ENCODE measurements at regions of chr6 and their contacts with region 1.

Region 1: DNA sequence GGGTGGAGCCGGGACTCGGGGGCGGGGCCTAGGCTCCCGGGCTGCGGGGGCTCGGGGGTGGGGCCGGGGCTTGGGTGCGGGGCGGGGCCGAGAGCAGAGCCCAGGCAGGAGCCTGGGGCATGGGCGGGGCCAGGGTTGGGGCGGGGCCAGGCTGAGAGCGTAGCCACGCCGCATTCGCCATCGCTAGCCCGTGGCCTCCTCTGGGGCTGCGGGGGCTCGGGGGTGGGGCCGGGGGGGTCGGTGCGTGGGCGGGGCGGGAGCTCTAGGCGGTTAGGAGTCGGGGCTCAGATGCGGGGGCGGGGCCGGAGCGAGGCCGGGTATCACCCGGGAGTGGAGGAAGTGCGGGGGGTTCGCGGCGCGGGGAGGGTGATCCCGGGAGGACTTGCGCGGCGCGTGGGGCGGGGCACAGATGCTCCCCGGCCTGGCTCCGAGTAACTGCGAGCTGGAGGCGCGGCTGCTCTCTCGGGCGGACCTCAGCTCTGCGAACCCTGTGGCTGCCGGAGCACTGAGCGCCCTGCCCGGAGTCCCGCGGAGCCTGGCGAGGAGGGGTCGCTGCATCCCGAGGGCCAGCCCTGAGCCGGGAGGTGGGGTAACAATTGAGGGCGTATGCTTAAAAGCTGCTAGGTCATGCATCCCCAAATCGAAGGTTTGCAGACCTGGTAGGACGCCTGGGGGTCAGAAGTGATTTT is 434 bp upstream of the ECI2 start:
- DNase-seq: peak; percentile 99
- H3K4me3 ChIP-seq: peak overlapping the region; percentile 85 to 93 (median 92)
- H3K27ac ChIP-seq: peak overlapping the region; percentile 95 to 98 (median 96)
- H3K4me1 ChIP-seq: peaks cover 15 to 47% (median 33%) of the 10 kb centered on the region in 4 donors
- H3K27me3 ChIP-seq: no peaks in the 10 kb centered on the region
- CTCF ChIP-seq: no peak
- EP300 ChIP-seq: no peak
- POLR2A ChIP-seq: no peak

Region 2: DNA sequence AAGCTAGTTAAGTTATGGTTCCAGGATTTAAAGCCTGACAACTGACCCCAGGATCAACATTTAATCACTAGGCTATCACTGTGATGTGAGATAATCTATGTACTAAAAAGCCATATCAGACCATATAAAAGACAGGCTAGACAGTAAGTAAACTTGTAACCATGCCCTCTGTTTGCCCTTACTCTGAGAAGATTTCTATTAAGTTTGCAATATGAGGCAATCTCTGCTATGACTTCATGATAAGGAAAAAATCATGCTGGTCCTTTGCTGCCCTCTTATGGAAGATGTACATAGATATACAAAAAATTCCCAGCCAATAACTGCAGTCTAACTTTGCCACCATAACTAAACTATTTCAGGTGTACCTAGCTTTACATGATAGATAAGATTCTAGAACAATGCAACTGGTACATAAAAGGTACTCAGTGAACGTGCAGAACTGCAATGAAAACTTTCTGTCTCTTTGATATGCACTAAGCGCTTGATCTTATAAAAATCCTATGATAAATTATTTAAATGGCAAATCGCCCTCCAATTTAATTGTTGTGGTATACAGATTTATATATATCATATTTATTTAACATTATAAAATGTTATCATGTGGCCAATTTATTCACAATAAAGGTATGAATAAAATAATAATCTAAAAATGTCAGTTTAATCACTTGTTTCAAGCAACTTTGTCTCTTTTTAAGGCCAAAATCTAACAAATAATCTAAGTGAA is 127.3 kb before region 1 on chr6:
- intact Hi-C with region 1: no loop called
- DNase-seq: no peak
- H3K4me3 ChIP-seq: no peak overlapping the region
- H3K27ac ChIP-seq: peak overlapping the region in 3 of 4 donors; percentile 12 to 57 (median 38)
- H3K4me1 ChIP-seq: peaks cover 6 to 20% (median 16%) of the 10 kb centered on the region in 4 donors
- H3K27me3 ChIP-seq: no peaks in the 10 kb centered on the region
- CTCF ChIP-seq: peak; percentile 51 to 55 (median 52)
- EP300 ChIP-seq: no peak
- POLR2A ChIP-seq: no peak

Region 3: DNA sequence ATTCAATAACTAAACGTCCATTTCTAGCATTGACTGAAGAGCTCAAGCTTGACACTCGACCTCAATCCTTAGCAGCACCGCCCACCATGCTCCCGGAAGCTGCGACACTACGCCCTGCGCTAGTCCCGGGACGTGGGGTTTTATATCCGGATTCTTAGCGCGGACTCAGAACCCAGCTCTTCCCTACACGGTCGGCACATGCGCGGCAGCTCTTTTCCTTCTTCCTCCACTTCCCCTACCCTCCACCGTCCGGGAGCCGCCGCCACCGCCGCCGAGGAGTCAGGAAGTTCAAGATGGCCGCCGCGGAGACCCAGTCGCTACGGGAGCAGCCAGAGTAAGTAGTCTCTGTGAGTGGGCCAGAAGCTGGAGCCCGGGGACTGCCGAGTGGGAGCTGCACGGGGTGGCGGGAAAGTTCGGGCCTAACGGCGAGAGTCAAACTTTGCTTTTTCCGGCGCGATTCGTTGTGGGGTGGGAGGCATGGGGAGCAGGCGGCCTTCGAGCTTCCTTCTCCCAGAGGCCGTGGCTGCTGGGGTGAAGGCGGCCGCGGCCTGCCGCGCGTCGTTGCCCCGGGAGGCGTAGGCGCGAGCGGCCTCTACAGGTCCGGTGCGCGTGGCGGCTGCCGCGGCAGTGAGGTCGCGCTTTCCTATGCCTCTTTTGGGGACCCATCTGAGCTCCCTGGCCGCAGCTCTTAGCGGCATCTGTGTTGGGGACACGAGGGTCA is 114.5 kb before region 1 on chr6:
- intact Hi-C with region 1: loop called (anchors 10 kb)
- DNase-seq: peak; percentile 98
- H3K4me3 ChIP-seq: peak overlapping the region; percentile 74 to 91 (median 86)
- H3K27ac ChIP-seq: peak overlapping the region; percentile 93 to 98 (median 98)
- H3K4me1 ChIP-seq: peaks cover 69 to 79% (median 76%) of the 10 kb centered on the region in 4 donors
- H3K27me3 ChIP-seq: peaks cover 0 to 3% (median 0%) of the 10 kb centered on the region in 4 donors
- CTCF ChIP-seq: peak in 2 of 3 experiments; percentile 29 to 48
- EP300 ChIP-seq: no peak
- POLR2A ChIP-seq: peak; percentile 8

Region 4: DNA sequence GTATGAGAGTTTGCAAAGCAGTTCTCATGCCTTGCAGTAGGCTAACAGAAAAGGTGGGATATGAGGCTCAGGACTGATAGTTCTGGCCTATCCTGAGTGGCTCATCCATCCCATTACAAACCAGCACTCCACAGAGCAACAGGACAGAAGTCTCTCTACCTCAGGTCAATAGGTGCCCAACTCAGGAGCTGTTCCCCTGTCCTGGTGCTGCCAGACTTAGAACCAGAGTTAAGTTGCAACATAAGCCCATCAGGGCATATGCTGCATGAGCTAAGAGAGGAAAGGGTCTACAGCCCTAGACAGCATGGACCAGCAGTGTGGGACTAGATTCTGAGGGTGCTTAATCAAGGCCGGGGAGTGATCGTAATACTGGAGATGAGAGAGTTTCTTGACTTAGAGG is 104.3 kb after region 1 on chr6:
- intact Hi-C with region 1: no loop called
- DNase-seq: peak; percentile 72
- H3K4me3 ChIP-seq: no peak overlapping the region
- H3K27ac ChIP-seq: no peak overlapping the region
- H3K4me1 ChIP-seq: no peaks in the 10 kb centered on the region
- H3K27me3 ChIP-seq: no peaks in the 10 kb centered on the region
- CTCF ChIP-seq: no peak
- EP300 ChIP-seq: no peak
- POLR2A ChIP-seq: no peak